ENCODE measurements at regions of chr2 and their contacts with region 1.

Region 1: GRCh38 chr2:11124503-11125068 is 30.7 kb upstream of the SLC66A3 start:
- H3K4me3 ChIP-seq: no peak overlapping the region
- H3K27ac ChIP-seq: no peak overlapping the region
- H3K4me1 ChIP-seq: no peaks in the 10 kb centered on the region
- CTCF ChIP-seq: peak; percentile 48; the same call in 1 of the 2 replicates

Region 2: GRCh38 chr2:10824191-10824590 is 300.4 kb before region 1 on chr2:
- CTCF ChIA-PET with region 1: interaction called, 96 read pairs
- POLR2A ChIA-PET with region 1: no interaction called
- H3K4me3 ChIP-seq: no peak overlapping the region
- H3K27ac ChIP-seq: no peak overlapping the region
- H3K4me1 ChIP-seq: no peaks in the 10 kb centered on the region
- CTCF ChIP-seq: no peak

Region 3: GRCh38 chr2:10900216-10901109 is 224.1 kb before region 1 on chr2:
- CTCF ChIA-PET with region 1: interaction called, 15 read pairs
- POLR2A ChIA-PET with region 1: no interaction called
- H3K4me3 ChIP-seq: no peak overlapping the region
- H3K27ac ChIP-seq: no peak overlapping the region
- H3K4me1 ChIP-seq: no peaks in the 10 kb centered on the region
- CTCF ChIP-seq: no peak

Region 4: GRCh38 chr2:11073251-11073650 is 51.3 kb before region 1 on chr2:
- CTCF ChIA-PET with region 1: interaction called, 39 read pairs
- POLR2A ChIA-PET with region 1: interaction called, 3 read pairs
- H3K4me3 ChIP-seq: no peak overlapping the region
- H3K27ac ChIP-seq: no peak overlapping the region
- H3K4me1 ChIP-seq: no peaks in the 10 kb centered on the region
- CTCF ChIP-seq: no peak

Measured in HEK293 (cell line).